ENCODE measurements at regions of chr6 and their contacts with region 1.

Region 1: GRCh38 chr6:106206905-106207304 is 118.7 kb downstream of the ATG5 start:
- DNase-seq: no peak
- ATAC-seq: no peak
- H3K4me3 ChIP-seq: no peak overlapping the region
- H3K27ac ChIP-seq: no peak overlapping the region
- H3K4me1 ChIP-seq: no peaks in the 10 kb centered on the region
- H3K27me3 ChIP-seq: no peaks in the 10 kb centered on the region
- CTCF ChIP-seq: no peak

Region 2: DNA sequence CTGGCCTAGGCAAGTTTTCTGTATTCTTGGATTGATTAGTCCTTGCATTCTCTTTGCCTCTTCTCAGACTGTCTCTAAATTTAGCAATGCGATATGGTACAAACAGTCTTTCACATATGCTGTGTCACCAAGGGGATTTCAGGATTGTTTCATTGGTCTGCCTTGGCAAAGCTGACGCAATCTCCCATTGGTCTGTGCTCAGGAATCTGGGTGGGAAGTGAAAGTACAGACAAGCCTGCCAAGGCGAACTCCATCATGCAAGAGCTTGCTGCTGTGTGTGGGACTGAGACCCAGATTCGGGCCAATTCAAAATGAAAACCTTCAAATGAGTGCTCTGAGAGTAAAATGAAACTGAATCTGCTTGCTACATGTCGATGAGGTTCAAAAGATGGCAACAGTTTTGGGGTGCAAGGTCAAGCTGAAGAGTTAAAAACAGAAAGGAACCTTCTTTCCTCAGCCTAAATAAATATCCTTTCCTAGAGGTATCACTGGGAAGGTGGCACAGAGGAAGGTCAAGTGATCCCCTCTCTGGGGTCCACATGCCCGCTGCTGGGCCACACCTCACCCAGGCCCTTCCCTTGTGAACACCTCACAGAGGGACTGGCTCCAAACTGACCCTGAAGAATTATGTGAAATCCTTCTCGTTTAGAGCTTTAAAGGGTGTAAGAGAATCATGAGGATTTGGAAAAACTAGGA is 605.2 kb before region 1 on chr6:
- CTCF ChIA-PET with region 1: no interaction called
- POLR2A ChIA-PET with region 1: interaction called, 13 read pairs
- in situ Hi-C with region 1: no loop called
- intact Hi-C with region 1: no loop called
- DNase-seq: no peak
- ATAC-seq: peak; percentile 49; the same call in 1 of the 2 replicates
- H3K4me3 ChIP-seq: no peak overlapping the region
- H3K27ac ChIP-seq: peak overlapping the region; percentile 76
- H3K4me1 ChIP-seq: no peaks in the 10 kb centered on the region
- H3K27me3 ChIP-seq: no peaks in the 10 kb centered on the region
- CTCF ChIP-seq: no peak

Region 3: DNA sequence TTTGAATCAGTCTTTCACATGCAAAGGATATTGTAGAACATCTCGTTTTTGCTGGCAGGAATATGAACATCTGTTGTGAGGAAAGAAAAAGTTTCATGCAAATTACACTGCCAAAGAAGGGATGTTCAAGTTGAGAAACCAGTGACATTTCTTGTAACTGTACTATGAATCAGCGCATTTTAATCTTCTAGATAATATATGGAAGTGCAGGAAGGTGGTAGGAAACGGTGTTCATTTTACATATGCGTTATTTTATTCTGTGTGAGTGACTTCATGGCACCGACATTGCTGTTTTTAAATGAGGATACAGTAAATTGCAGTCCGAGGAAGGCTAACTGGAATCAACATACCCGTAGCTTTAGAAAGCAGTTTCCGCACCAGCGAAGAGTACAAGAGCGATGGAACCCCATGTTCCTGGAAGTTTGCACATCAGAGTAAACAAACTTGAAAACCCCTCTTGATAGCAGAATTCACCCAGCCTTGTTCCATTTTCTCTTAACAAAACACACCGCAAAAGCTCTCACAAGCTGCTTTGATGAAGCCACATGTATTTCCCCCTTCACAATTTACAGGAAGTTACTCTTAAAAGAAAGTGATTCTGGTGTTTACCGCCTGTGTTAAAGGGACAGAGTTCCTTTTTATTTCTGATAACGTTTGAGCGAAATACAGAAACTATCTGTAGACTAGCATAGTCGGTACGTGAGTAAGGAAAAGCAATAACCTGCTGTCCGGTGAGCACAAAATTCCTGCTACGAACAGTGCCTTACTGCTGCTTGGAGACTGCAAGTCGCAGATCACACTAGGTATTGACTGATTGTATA is 109.3 kb before region 1 on chr6:
- CTCF ChIA-PET with region 1: no interaction called
- POLR2A ChIA-PET with region 1: no interaction called
- in situ Hi-C with region 1: no loop called
- intact Hi-C with region 1: no loop called
- DNase-seq: no peak
- ATAC-seq: peak; percentile 51; the same call in 1 of the 2 replicates
- H3K4me3 ChIP-seq: peak overlapping the region; percentile 38 to 48
- H3K27ac ChIP-seq: peak overlapping the region; percentile 57
- H3K4me1 ChIP-seq: peaks cover 23% of the 10 kb centered on the region
- H3K27me3 ChIP-seq: no peaks in the 10 kb centered on the region; the same call in 1 of the 2 replicates
- CTCF ChIP-seq: no peak